ENCODE measurements at regions of chr5 and their contacts with region 1.

Region 1: DNA sequence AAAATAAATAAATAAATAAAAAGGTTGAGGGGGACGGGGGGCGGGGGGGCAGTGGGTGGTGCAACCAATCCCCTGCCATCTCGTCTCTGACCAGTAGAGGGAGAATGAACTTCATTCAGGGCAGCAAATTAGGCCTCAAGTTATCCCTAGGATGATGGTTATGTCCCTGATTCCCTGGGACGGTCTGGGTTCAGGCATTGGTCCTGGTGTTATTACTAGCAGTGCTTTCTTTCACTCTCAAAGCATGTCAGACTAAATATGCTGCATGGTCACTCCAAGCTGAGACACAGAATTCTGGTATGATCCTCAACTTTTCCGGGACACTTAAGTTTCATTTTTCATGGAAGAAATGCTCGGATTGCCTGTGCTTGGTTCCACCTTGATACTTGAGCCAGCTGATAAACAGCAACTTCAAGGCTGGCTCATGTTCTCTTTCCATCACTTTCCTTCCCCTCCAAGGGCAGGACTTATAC is 59.4 kb downstream of the DAP start:
- DNase-seq: peak in 1 of 6 donors; percentile 39
- ATAC-seq: peak in 3 of 4 donors; percentile 10 to 32 (median 27)
- H3K4me3 ChIP-seq: no peak overlapping the region
- H3K27ac ChIP-seq: peak overlapping the region; percentile 68 to 89 (median 76)
- H3K4me1 ChIP-seq: peaks cover 63 to 81% (median 75%) of the 10 kb centered on the region in 3 donors
- H3K27me3 ChIP-seq: no peaks in the 10 kb centered on the region
- CTCF ChIP-seq: peak; percentile 44 to 71 (median 58)

Region 2: GRCh38 chr5:10441083-10441991 is 260.3 kb before region 1 on chr5 and contains the start of gene ROPN1L:
- intact Hi-C with region 1: no loop called
- DNase-seq: peak; percentile 80 to 94 (median 86)
- ATAC-seq: peak; percentile 98 to 99 (median 98)
- H3K4me3 ChIP-seq: peak within 1 kb of the TSS; percentile 47 to 75 (median 67)
- H3K27ac ChIP-seq: peak within 1 kb of the TSS; percentile 24 to 79 (median 50)
- H3K4me1 ChIP-seq: peaks cover 0 to 12% (median 8%) of the 10 kb centered on the region in 3 donors
- H3K27me3 ChIP-seq: no peaks in the 10 kb centered on the region
- CTCF ChIP-seq: no peak
- total RNA-seq, gene ROPN1L: 0.18 to 1.9 (median 0.60) TPM

Region 3: DNA sequence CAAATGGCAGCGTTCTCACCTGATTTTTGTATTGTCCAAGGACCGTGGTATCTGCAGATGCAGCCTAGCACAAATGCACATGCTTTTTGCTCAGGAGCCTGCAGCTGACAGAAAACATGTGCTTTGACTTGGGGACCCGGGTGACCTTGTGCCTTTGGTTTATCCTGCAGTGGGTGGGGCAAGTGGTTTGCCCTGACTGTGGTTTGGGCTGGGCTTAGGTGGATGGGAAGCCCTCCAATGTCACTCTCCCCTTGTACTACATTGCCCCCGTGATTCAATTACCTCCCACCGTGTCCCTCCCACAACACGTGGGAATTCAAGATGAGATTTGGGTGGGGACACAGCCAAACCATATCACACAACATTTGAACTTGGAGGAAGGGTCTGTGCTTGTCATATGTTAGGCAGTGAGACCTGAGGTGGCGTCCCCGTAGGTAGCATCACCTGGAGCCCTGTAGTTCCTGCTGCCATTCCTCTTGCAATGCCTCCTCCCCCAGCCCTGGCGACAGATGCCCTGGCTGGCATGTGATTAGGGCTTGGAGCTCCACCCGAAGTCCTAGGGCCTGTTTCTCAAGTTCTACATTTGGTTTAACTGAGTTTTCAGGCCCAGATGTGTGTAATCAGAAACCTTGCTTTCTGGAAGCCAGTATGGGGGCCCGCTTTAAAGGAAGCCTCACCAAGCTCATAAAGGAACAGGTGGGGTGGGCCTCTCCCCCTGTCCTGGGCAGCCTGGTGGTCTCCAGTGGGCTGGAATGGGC is 135.6 kb before region 1 on chr5:
- intact Hi-C with region 1: no loop called
- DNase-seq: peak in 1 of 6 donors; percentile 23
- ATAC-seq: no peak
- H3K4me3 ChIP-seq: peak overlapping the region in 1 of 4 donors; percentile 64
- H3K27ac ChIP-seq: no peak overlapping the region
- H3K4me1 ChIP-seq: peaks cover 0 to 8% (median 0%) of the 10 kb centered on the region in 3 donors
- H3K27me3 ChIP-seq: peaks cover 0 to 8% (median 4%) of the 10 kb centered on the region in 4 donors
- CTCF ChIP-seq: no peak

Region 4: DNA sequence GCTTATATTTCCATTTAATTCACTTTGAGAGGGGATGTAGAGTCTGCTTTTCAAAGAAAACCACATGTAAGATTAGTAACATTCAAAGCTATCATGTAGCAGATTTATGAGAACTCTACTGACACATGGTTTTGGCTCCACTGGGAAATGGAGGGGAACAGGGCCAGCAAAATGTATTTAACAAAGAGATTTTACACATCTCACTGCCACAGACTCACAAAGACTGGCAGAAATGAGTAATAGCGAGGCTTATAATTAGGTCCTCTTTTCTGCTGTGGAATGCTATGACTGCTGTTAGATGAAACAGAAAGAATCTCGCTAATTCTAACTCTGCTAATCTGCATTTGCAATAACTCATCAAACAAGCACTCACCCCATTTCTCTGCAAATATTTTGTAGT is 54.9 kb after region 1 on chr5:
- intact Hi-C with region 1: loop called in 1 of 3 experiments (anchors 10 kb)
- DNase-seq: no peak
- ATAC-seq: no peak
- H3K4me3 ChIP-seq: peak overlapping the region in 1 of 4 donors; percentile 86
- H3K27ac ChIP-seq: peak overlapping the region in 1 of 4 donors; percentile 57
- H3K4me1 ChIP-seq: peaks cover 16 to 38% (median 22%) of the 10 kb centered on the region in 3 donors
- H3K27me3 ChIP-seq: no peaks in the 10 kb centered on the region
- CTCF ChIP-seq: no peak

Region 5: DNA sequence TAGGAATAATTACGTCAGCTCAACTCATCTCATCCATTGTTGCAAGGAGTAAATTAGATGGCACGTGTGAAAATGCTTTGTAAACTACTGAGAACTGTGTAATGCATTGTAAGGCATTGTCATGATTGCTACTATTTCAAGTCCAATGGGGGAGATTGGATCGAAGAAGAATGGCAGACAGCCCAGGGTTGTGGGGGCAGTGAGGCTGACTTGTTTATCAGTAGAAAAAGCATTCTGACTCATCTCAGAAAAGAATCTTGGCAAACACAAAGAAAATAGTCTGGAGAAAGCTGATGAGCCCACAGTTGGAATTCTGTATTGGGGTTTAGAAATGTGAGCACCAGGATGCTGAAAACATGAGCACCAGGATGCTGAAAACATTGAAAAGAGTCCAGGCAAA is 87.4 kb after region 1 on chr5:
- intact Hi-C with region 1: no loop called
- DNase-seq: no peak
- ATAC-seq: peak in 2 of 4 donors; percentile 15 to 27
- H3K4me3 ChIP-seq: no peak overlapping the region
- H3K27ac ChIP-seq: no peak overlapping the region
- H3K4me1 ChIP-seq: no peaks in the 10 kb centered on the region
- H3K27me3 ChIP-seq: no peaks in the 10 kb centered on the region
- CTCF ChIP-seq: no peak

Measured in pancreas (tissue), 10 donors.